ENCODE measurements at regions of chr2 and their contacts with region 1.

Region 1: DNA sequence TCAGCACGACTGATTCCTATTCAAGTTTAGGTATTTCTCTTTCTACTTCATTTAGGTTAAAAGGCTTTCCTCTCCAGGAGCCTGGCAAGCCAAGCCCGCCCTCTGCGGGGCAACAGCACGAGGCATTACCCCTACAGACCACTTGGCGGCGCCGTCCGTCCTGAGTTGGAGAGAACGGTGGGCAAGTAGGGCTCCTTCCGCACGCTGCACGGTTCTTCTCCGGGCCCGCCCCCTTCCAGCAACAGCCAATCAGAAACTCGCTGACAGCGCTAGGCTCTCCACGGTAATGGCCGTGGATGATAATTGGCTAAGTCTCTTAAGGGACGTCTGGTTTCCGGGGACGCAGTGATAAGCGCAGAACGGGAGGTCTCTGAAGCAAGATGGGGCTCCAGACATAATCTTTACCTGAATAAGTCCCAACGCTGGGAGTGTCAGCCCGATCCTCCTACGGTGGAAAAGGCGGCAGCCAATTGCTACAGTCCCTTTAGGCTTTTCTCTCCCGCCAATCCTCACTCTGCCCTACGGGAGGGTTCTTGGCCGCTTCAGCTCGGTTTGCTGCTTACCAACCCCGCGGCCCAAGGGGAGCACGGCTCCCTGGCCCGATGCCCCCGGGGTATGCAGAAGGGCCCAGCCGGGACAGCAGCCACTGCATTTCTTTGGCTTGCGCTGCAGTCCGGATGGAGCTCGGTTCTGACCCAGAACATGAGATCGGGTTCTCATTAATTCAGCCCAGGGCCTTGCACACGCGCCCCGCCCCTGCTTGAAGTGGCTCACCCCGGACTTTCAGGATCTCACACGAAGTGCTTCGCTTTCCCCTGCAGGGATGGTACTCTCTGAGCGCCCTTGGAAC is 206.9 kb upstream of the PKDCC start:
- DNase-seq: peak; percentile 93
- H3K4me3 Mint-ChIP-seq: peak overlapping the region; percentile 96
- H3K27ac Mint-ChIP-seq: peak overlapping the region; percentile 83
- H3K4me1 Mint-ChIP-seq: peaks cover 8% of the 10 kb centered on the region
- H3K27me3 Mint-ChIP-seq: peaks cover 11% of the 10 kb centered on the region

Region 2: GRCh38 chr2:41869542-41870264 is 28.8 kb after region 1 on chr2:
- intact Hi-C with region 1: loop called (anchors 1 kb)
- DNase-seq: peak; percentile 32
- H3K4me3 Mint-ChIP-seq: no peak overlapping the region
- H3K27ac Mint-ChIP-seq: no peak overlapping the region
- H3K4me1 Mint-ChIP-seq: no peaks in the 10 kb centered on the region
- H3K27me3 Mint-ChIP-seq: peaks cover 12% of the 10 kb centered on the region

Region 3: GRCh38 chr2:42086500-42086953 is 245.6 kb after region 1 on chr2:
- intact Hi-C with region 1: loop called (anchors 1 kb)
- DNase-seq: peak; percentile 23
- H3K4me3 Mint-ChIP-seq: no peak overlapping the region
- H3K27ac Mint-ChIP-seq: no peak overlapping the region
- H3K4me1 Mint-ChIP-seq: peaks cover 16% of the 10 kb centered on the region
- H3K27me3 Mint-ChIP-seq: peaks cover 24% of the 10 kb centered on the region

Region 4: DNA sequence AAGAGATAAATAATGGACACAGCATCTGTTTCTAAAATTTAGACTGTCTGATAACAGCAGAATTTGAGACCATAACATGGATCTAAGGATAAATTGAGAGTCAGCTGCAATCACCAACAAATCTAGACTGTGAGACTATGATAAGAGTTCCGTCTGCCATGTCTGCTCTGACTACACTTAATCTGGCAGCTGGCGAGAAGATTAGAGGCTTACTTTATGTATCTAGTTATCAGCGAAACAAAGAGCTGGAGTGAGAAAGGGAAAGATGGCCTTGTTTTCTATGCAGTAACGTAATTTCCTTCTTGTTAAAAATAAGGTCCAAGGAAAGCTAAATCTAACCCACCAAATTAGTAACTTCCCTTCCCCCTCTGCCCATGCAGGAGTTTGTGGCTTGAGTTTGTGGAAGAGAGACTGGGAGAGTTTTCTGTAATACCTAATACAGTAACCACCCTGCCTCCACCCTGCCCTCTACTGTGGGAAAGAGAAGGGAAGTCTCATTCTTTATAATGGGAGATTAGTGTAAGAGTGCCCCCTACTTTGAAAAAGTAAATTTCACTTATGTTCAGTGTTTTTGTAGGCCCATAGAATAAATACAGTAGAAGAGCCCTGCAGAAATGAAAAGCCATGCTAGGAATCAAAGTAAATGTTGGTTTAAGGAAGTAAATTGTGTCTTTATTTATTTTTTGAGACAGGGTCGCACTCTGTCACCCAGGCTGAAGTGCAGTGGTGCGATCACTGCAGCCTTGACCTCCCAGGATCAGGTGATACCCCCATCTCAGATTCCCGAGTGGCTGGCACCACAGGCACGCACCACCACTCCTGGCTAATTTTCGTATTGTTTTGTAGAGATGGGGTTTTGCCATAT is 355.7 kb after region 1 on chr2:
- intact Hi-C with region 1: loop called (anchors 10 kb)
- DNase-seq: peak; percentile 11
- H3K4me3 Mint-ChIP-seq: no peak overlapping the region
- H3K27ac Mint-ChIP-seq: no peak overlapping the region
- H3K4me1 Mint-ChIP-seq: peaks cover 61% of the 10 kb centered on the region
- H3K27me3 Mint-ChIP-seq: no peaks in the 10 kb centered on the region

Region 5: DNA sequence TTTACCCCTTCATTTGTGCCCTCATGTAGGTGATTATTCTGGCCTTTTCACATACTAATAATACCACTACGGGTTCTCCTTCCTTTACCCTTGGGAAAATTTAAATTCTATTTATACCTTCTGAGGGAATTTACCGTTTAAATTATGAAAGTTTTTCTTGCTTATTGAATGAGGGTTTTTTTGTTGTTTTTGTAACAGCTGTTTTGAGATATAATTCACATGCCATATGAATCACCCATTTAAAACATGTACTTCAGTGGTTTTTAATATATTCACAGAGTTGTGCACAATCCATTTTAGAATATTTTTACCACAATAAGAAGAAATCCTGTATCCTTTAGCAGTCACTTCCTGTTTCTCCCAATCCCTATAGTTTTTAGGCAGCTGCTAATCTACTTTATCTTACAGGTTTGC is 382.9 kb after region 1 on chr2:
- intact Hi-C with region 1: loop called (anchors 10 kb)
- DNase-seq: no peak
- H3K4me3 Mint-ChIP-seq: no peak overlapping the region
- H3K27ac Mint-ChIP-seq: peak overlapping the region; percentile 10
- H3K4me1 Mint-ChIP-seq: peaks cover 46% of the 10 kb centered on the region
- H3K27me3 Mint-ChIP-seq: no peaks in the 10 kb centered on the region

Measured in activated T-helper 1 cell treated with anti-CD3 and anti-CD28 coated beads, Interleukin-12 subunit alpha, Interleukin-12 subunit beta, Interleukin-2, Interleukin-4 antibody, amounts not matched to agents 30 ng/mL and 10 ng/mL and 1 ng/mL, durations not matched to agents 14 hours and 24 hours and 36 hours (primary cell).